ENCODE measurements at regions of chr6 and their contacts with region 1.

Region 1: GRCh38 chr6:138109042-138109997 is 2.1 kb upstream of the PERP start:
- DNase-seq: peak; percentile 76
- H3K4me3 ChIP-seq: peak overlapping the region; percentile 7 to 66 (median 25)
- H3K27ac ChIP-seq: peak overlapping the region; percentile 99
- H3K4me1 ChIP-seq: peaks cover 16% of the 10 kb centered on the region
- H3K27me3 ChIP-seq: no peaks in the 10 kb centered on the region
- CTCF ChIP-seq: peak; percentile 96 to 99

Region 2: GRCh38 chr6:137661601-137662000 is 447.7 kb before region 1 on chr6:
- CTCF ChIA-PET with region 1: no interaction called
- dilution Hi-C with region 1: no loop called
- in situ Hi-C with region 1: no loop called
- intact Hi-C with region 1: loop called (anchors 10 kb)
- DNase-seq: peak; percentile 16
- H3K4me3 ChIP-seq: no peak overlapping the region
- H3K27ac ChIP-seq: no peak overlapping the region
- H3K4me1 ChIP-seq: no peaks in the 10 kb centered on the region
- H3K27me3 ChIP-seq: peaks cover 4% of the 10 kb centered on the region
- CTCF ChIP-seq: peak; percentile 70 to 73

Region 3: GRCh38 chr6:137707590-137708360 is 401.5 kb before region 1 on chr6:
- CTCF ChIA-PET with region 1: no interaction called
- dilution Hi-C with region 1: no loop called
- in situ Hi-C with region 1: loop called in 1 of 2 experiments (anchors 25 kb)
- intact Hi-C with region 1: loop called (anchors 2 kb)
- DNase-seq: peak; percentile 92
- H3K4me3 ChIP-seq: no peak overlapping the region
- H3K27ac ChIP-seq: peak overlapping the region; percentile 64
- H3K4me1 ChIP-seq: peaks cover 7% of the 10 kb centered on the region
- H3K27me3 ChIP-seq: no peaks in the 10 kb centered on the region
- CTCF ChIP-seq: peak; percentile 65 to 75

Region 4: GRCh38 chr6:138001750-138002349 is 107.5 kb before region 1 on chr6:
- CTCF ChIA-PET with region 1: interaction called, 8 read pairs
- dilution Hi-C with region 1: no loop called
- in situ Hi-C with region 1: loop called (anchors 5 kb)
- intact Hi-C with region 1: loop called (anchors 1 kb)
- DNase-seq: peak; percentile 43
- H3K4me3 ChIP-seq: no peak overlapping the region
- H3K27ac ChIP-seq: no peak overlapping the region
- H3K4me1 ChIP-seq: peaks cover 11% of the 10 kb centered on the region
- H3K27me3 ChIP-seq: no peaks in the 10 kb centered on the region
- CTCF ChIP-seq: peak; percentile 91

Region 5: DNA sequence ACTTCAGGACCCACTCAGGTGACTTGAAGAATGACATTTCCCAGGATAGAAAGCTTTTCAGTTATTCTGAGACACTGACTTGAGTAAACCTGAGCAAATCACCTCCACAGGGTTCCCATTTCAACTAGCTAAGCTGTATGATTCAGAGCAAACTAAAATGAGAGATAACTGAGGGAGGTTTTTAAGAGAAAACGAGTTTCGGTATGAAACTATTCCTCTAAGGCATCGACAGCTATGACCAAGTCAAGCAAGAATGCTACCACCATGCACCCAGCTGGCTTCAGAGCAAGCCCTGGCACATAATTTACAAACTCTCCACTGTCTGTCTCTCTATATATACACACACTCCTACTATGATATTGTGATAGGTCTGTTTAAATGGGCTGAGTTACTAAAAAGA is 77.5 kb before region 1 on chr6:
- CTCF ChIA-PET with region 1: interaction called, 3 read pairs
- dilution Hi-C with region 1: no loop called
- in situ Hi-C with region 1: loop called in 1 of 2 experiments (anchors 5 kb)
- intact Hi-C with region 1: loop called (anchors 1 kb)
- DNase-seq: peak; percentile 95
- H3K4me3 ChIP-seq: no peak overlapping the region
- H3K27ac ChIP-seq: peak overlapping the region; percentile 100
- H3K4me1 ChIP-seq: peaks cover 73% of the 10 kb centered on the region
- H3K27me3 ChIP-seq: no peaks in the 10 kb centered on the region
- CTCF ChIP-seq: no peak

Region 6: GRCh38 chr6:138403801-138404661 is 294.7 kb after region 1 on chr6 and contains the start of gene HEBP2:
- CTCF ChIA-PET with region 1: no interaction called
- dilution Hi-C with region 1: no loop called
- in situ Hi-C with region 1: loop called in 1 of 2 experiments (anchors 10 kb)
- intact Hi-C with region 1: loop called (anchors 2 kb)
- DNase-seq: peak; percentile 95
- H3K4me3 ChIP-seq: peak within 1 kb of the TSS; percentile 84 to 98 (median 88)
- H3K27ac ChIP-seq: peak within 1 kb of the TSS; percentile 98
- H3K4me1 ChIP-seq: peaks cover 21% of the 10 kb centered on the region
- H3K27me3 ChIP-seq: no peaks in the 10 kb centered on the region
- CTCF ChIP-seq: peak in 1 of 2 donors; percentile 40
- total RNA-seq, gene HEBP2: 63.8 to 99.1 TPM

Region 7: DNA sequence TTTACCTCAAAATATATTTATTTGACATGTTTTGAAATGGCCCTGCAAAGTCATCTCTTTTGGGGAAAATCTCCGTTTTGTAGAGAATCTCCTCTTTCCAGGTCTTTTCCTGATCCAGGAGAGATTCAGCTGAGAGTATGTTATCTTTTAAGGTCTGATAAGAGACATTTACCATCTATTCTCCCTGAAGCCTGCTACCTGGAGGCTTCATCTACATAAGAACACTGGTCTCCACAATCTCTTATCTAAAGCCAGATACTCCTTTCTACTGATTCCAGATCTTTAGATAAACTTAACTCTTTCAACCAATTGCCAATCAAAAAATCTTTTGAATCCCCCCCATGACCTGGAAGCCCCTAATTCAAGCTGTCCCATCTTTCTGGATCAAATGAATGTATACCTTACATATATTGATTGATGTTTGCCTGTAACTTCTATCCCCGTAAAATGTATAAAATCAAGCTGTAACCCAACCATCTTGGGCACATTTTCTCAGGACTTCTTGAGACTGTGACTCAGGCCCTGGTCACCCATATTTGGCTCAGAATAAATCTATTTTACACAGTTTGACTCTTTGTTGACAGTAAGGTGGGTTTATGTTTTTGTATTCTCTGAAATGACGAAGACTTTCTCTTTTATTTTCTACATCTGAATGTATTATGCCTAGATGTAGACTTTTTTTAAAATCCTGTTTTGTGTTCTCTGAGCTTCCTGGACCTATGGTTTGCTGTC is 782.1 kb after region 1 on chr6:
- CTCF ChIA-PET with region 1: no interaction called
- dilution Hi-C with region 1: no loop called
- in situ Hi-C with region 1: no loop called
- intact Hi-C with region 1: no loop called
- DNase-seq: peak; percentile 11
- H3K4me3 ChIP-seq: no peak overlapping the region
- H3K27ac ChIP-seq: no peak overlapping the region
- H3K4me1 ChIP-seq: peaks cover 7% of the 10 kb centered on the region
- H3K27me3 ChIP-seq: no peaks in the 10 kb centered on the region
- CTCF ChIP-seq: no peak

Measured in mammary epithelial cell (primary cell).